HEK293 (cell line): ENCODE measurements at regions of chr5 and their contacts with region 1.

Region 1: DNA sequence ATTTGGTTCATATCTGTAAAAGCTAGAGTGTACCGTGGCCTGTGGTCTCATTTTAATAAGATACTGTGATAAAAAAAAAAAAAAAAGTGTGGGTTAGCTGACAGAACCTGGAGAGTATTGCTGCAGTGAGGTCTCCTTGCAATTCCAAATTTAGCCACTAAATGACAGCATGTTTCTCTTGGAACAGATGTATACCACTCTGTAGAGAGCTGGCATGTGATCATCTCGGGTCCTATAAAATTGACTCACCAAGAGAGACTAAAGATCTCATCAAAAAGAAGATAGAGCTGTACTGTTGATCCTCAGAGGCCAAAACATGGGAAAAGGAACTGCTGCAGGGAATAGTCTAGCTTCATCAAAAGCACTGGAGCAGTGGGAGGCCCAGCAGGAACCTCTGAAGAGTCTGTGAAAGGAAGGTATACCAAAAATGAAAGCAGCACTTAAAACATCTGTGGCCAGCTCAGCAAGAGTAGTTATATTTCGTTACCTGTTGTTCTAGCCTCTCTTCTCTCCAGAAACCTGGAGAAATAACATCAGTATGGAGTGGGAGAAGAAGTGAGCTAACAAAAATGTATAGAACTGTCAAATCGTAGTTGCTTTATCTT is 826.8 kb downstream of the EFNA5 start:
- H3K4me3 ChIP-seq: no peak overlapping the region
- H3K27ac ChIP-seq: no peak overlapping the region
- H3K4me1 ChIP-seq: no peaks in the 10 kb centered on the region
- CTCF ChIP-seq: no peak

Region 2: DNA sequence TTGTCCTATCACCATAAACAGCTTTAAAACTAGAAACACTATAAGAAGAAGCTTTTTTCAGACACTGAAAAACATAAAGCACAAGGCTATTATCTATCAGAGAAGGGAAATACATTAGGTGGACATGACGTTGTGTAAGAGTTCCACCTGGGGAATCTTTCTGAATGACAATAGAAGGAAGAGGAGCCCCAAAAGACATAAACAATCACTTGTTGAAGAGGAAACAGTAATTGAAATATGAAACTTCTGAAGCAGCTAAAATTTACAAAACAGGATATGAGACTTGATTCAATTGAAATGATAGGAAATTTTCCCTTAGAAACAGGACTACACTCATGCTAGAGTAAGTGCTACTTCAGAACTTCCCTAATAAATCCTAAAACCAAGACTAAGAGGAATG is 106.8 kb before region 1 on chr5:
- CTCF ChIA-PET with region 1: interaction called, 10 read pairs
- POLR2A ChIA-PET with region 1: no interaction called
- H3K4me3 ChIP-seq: no peak overlapping the region
- H3K27ac ChIP-seq: no peak overlapping the region
- H3K4me1 ChIP-seq: no peaks in the 10 kb centered on the region
- CTCF ChIP-seq: no peak